Activated T-helper 1 cell treated with anti-CD3 and anti-CD28 coated beads, Interleukin-12 subunit alpha, Interleukin-12 subunit beta, Interleukin-2, Interleukin-4 antibody, amounts not matched to agents 30 ng/mL and 10 ng/mL and 1 ng/mL, durations not matched to agents 14 hours and 24 hours and 36 hours (primary cell): ENCODE measurements at regions of chr15 and their contacts with region 1.

Region 1: GRCh38 chr15:56207092-56207491 is 36.6 kb downstream of the RFX7 start:
- DNase-seq: no peak
- H3K4me3 Mint-ChIP-seq: no peak overlapping the region
- H3K27ac Mint-ChIP-seq: peak overlapping the region; percentile 22
- H3K4me1 Mint-ChIP-seq: peaks cover 67% of the 10 kb centered on the region
- H3K27me3 Mint-ChIP-seq: no peaks in the 10 kb centered on the region

Region 2: DNA sequence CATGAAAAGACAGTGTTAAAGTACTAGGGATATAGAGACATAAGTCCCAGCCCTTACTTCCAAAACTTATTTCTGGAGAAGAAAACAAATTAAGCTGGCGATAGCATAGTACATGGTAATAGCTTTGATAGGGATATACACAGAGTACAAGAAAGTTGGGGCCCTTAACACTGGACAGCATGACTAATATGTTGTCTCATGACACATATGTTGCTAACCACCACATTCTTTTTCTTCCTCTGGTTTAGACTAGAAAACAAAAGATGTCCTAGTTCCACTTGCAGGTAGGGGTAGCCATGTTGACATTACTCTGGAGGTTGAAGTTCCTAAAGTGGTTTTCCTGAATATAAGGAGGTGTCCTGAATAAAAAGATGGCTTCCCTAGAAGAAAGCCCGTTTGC is 38.7 kb before region 1 on chr15:
- intact Hi-C with region 1: loop called (anchors 5 kb)
- DNase-seq: no peak
- H3K4me3 Mint-ChIP-seq: no peak overlapping the region
- H3K27ac Mint-ChIP-seq: no peak overlapping the region
- H3K4me1 Mint-ChIP-seq: peaks cover 58% of the 10 kb centered on the region
- H3K27me3 Mint-ChIP-seq: no peaks in the 10 kb centered on the region